ENCODE measurements at regions of chr15 and their contacts with region 1.

Region 1: GRCh38 chr15:92808978-92809879 is 90.9 kb upstream of the CHD2 start:
- DNase-seq: peak; percentile 99 to 100
- ATAC-seq: peak; percentile 82 to 91 (median 84)
- H3K4me3 ChIP-seq: peak overlapping the region; percentile 67
- H3K27ac ChIP-seq: peak overlapping the region; percentile 92
- H3K4me1 ChIP-seq: peaks cover 17% of the 10 kb centered on the region
- H3K27me3 ChIP-seq: no peaks in the 10 kb centered on the region
- CTCF ChIP-seq: peak; percentile 98

Region 2: GRCh38 chr15:92683232-92683834 is 125.9 kb before region 1 on chr15:
- intact Hi-C with region 1: no loop called
- DNase-seq: peak; percentile 36 to 67
- ATAC-seq: peak; percentile 75 to 91 (median 85)
- H3K4me3 ChIP-seq: no peak overlapping the region
- H3K27ac ChIP-seq: no peak overlapping the region
- H3K4me1 ChIP-seq: no peaks in the 10 kb centered on the region
- H3K27me3 ChIP-seq: no peaks in the 10 kb centered on the region
- CTCF ChIP-seq: peak; percentile 63

Region 3: GRCh38 chr15:92831655-92832328 is 22.6 kb after region 1 on chr15:
- intact Hi-C with region 1: loop called in 1 of 2 experiments (anchors 1 kb)
- DNase-seq: peak; percentile 89 to 97
- ATAC-seq: peak; percentile 94 to 98 (median 96)
- H3K4me3 ChIP-seq: peak overlapping the region; percentile 59
- H3K27ac ChIP-seq: peak overlapping the region; percentile 95
- H3K4me1 ChIP-seq: peaks cover 35% of the 10 kb centered on the region
- H3K27me3 ChIP-seq: no peaks in the 10 kb centered on the region
- CTCF ChIP-seq: peak; percentile 7

Region 4: GRCh38 chr15:92881802-92882696 is 72.8 kb after region 1 on chr15:
- intact Hi-C with region 1: loop called (anchors 1 to 5 kb)
- DNase-seq: peak; percentile 99
- ATAC-seq: peak; percentile 90 to 97 (median 96)
- H3K4me3 ChIP-seq: peak overlapping the region; percentile 83
- H3K27ac ChIP-seq: peak overlapping the region; percentile 90
- H3K4me1 ChIP-seq: peaks cover 33% of the 10 kb centered on the region
- H3K27me3 ChIP-seq: no peaks in the 10 kb centered on the region
- CTCF ChIP-seq: no peak

Region 5: DNA sequence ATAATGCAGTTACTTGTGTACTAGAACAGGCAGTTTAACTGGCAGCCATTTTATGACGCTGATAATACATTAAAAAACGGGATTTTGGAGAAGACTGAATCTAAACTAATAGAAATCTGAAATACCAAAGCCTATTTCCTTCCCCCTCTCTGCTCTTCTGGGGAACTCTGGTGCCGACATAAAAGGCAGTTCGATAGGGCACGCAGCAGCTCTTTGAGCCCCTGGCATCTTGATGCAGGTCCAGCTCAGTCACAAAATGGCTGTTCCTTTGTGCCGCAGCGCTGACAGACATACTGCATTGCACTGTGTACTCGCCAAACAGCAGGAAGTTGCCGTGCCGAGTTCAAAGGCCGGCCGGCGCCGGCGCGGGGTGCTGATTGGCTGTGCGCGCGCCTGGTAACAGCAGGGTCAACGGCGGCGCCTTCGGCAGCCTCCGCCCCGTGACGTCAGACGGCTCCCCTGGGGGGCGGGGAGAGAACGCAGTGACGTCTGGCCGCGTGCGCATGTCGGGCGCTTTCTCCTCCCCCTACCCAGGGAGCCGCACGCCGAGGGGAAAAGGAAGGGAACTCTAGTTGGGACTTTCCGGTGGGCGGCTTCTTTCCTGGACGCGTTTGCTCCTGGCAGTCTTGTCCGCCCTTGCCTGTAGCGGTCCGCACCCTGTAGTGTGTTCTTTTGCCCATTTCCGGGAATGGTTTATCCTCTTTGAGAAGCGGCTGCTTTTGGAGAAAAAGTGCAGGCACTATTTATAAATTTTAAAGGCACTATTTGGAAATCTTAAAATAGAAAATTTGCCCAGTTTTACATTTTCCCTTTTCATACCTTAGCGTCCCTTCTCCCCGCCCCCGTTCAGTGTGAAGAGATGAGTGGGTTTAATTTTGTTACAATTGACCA is 95.0 kb after region 1 on chr15:
- intact Hi-C with region 1: loop called (anchors 1 to 5 kb)
- DNase-seq: peak; percentile 99 to 100
- ATAC-seq: peak; percentile 86 to 95 (median 90)
- H3K4me3 ChIP-seq: peak overlapping the region; percentile 68
- H3K27ac ChIP-seq: peak overlapping the region; percentile 95
- H3K4me1 ChIP-seq: peaks cover 40% of the 10 kb centered on the region
- H3K27me3 ChIP-seq: no peaks in the 10 kb centered on the region
- CTCF ChIP-seq: no peak

Region 6: DNA sequence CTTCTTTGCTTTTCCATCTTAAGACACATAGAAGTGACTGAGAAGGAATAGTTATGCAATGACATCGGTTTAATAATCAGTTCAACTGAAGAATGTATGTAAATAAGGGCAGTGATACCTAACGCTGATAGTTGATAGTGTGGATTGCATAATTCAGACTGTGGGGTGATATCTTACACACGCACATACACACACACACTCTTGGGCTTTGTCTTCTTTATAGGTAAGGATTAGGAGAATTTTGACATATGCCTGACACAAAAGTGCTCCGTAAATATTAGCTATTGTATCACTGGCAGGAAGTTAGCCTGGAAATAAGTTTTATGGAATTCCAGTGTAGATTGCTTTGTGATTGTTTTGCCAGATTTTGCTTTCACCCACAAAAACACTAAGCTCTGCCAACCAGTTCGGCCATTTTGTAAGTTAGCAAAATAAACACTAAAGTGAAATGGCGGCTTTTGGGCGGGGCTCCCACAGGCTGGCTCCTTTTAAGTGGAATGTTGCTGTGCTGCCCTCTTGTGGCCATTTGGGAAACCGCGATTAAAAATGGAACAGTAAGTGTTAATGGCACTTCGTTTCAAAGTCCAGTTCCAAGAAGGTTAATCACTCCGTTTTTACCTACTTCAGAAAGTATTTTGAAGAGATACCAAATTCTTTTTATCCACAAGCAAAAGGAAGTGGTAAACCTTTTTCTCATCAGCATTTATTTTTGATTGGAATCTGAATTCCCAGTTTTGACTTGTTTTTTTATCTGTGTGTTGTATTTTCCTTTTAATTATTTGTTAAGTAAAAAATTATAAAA is 108.6 kb after region 1 on chr15:
- intact Hi-C with region 1: loop called (anchors 2 to 5 kb)
- DNase-seq: peak; percentile 92 to 94
- ATAC-seq: peak; percentile 46 to 62 (median 54)
- H3K4me3 ChIP-seq: peak overlapping the region; percentile 46
- H3K27ac ChIP-seq: peak overlapping the region; percentile 95
- H3K4me1 ChIP-seq: peaks cover 83% of the 10 kb centered on the region
- H3K27me3 ChIP-seq: no peaks in the 10 kb centered on the region
- CTCF ChIP-seq: peak; percentile 95

Measured in psoas muscle (tissue), 8 donors.